IMR-90 (cell line): ENCODE measurements at regions of chr1 and their contacts with region 1.

Region 1: GRCh38 chr1:52002038-52002917 is 11.8 kb upstream of the RAB3B start:
- DNase-seq: peak; percentile 95
- ATAC-seq: peak; percentile 91
- H3K4me3 ChIP-seq: no peak overlapping the region
- H3K27ac ChIP-seq: no peak overlapping the region
- H3K4me1 ChIP-seq: peaks cover 5% of the 10 kb centered on the region
- H3K27me3 ChIP-seq: no peaks in the 10 kb centered on the region
- CTCF ChIP-seq: peak; percentile 94
- POLR2A ChIP-seq: no peak
- RAD21 ChIP-seq: peak; percentile 99

Region 2: DNA sequence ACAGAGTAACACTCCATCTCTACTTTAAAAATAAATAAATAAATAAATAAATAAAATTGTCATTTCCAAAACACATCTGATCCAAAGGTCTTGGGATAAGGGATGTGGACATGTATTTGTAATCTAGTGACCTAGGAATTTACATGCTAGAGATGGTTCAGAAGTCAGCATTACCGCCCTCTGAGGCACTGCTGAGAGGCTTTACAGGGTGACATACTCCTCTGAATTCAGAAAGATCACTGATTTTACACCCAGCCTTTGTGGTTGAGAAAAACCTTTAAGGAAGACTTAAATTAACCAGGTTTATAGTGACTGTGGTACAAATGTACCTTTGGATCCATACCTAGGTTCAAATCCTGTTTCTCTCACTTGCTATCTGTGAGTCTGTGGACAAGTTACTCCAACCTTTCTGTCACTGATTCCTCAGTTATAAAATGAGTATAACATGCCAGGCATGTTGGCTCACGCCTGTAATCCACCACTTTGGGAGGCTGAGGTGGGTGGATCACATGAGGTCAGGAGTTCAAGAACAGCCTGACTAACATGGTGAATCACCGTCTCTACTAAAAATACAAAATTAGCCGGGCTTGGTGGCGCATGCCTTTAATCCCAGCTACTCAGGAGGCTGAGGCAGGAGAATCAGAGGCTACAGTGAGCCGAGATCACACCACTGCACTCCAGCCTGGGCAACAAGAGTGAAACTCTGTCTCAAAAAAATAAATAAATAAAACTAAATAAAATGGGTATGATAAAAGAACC is 365.3 kb before region 1 on chr1:
- CTCF ChIA-PET with region 1: no interaction called
- POLR2A ChIA-PET with region 1: no interaction called
- dilution Hi-C with region 1: no loop called
- in situ Hi-C with region 1: no loop called
- intact Hi-C with region 1: loop called (anchors 10 kb)
- DNase-seq: peak; percentile 91
- ATAC-seq: peak; percentile 97
- H3K4me3 ChIP-seq: no peak overlapping the region
- H3K27ac ChIP-seq: no peak overlapping the region; the same call in none of the 2 replicates
- H3K4me1 ChIP-seq: peaks cover 9% of the 10 kb centered on the region; the same call in 1 of the 2 replicates
- H3K27me3 ChIP-seq: no peaks in the 10 kb centered on the region
- CTCF ChIP-seq: no peak
- POLR2A ChIP-seq: peak; percentile 16; the same call in 1 of the 2 replicates
- RAD21 ChIP-seq: peak; percentile 30

Region 3: DNA sequence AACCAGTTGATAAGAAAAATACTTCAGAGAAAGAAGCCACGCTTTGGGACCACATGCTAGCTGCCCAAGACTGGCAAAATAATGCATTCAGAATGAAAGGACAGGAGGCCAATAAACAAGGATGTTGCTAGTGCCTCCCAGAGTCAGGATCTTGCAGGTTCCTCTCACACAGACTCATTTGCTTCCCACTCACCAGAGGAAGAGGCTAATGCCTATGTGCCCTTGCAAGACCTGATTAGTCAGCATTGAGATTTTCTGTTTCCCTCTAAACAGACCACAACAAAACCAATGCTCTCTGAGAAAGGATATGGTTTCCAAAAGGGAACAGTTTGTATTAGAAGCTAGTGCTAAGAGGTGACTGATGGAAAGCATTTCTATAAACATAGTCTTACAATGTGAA is 209.4 kb before region 1 on chr1:
- CTCF ChIA-PET with region 1: no interaction called
- POLR2A ChIA-PET with region 1: no interaction called
- dilution Hi-C with region 1: no loop called
- in situ Hi-C with region 1: no loop called
- intact Hi-C with region 1: loop called (anchors 5 kb)
- DNase-seq: peak; percentile 88
- ATAC-seq: peak; percentile 83
- H3K4me3 ChIP-seq: no peak overlapping the region
- H3K27ac ChIP-seq: no peak overlapping the region
- H3K4me1 ChIP-seq: no peaks in the 10 kb centered on the region
- H3K27me3 ChIP-seq: no peaks in the 10 kb centered on the region
- CTCF ChIP-seq: no peak; the same call in 1 of the 2 replicates
- POLR2A ChIP-seq: no peak
- RAD21 ChIP-seq: 0 out of 2 replicates have a peak, but pooled peaks have one; percentile 25

Region 4: DNA sequence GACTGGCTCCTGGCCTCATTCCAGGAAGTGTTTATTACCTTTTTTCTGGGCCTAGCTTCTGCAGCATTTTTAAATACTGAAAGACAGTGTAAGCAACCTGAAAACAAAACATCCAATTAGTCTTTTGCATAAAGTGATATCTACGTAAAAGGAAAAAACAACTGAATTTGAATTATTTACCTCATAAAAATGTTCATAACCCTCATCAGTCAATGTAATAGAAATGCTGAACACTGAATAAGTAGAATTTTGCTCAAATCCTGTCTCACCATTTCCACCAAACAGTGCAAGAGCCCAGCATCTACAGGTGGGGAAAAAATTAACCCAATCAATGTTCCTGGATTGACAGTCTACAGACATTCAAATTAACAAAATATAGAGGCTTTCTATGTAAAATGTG is 187.8 kb before region 1 on chr1:
- CTCF ChIA-PET with region 1: no interaction called
- POLR2A ChIA-PET with region 1: no interaction called
- dilution Hi-C with region 1: no loop called
- in situ Hi-C with region 1: no loop called
- intact Hi-C with region 1: loop called (anchors 5 kb)
- DNase-seq: no peak
- ATAC-seq: no peak
- H3K4me3 ChIP-seq: no peak overlapping the region
- H3K27ac ChIP-seq: no peak overlapping the region
- H3K4me1 ChIP-seq: peaks cover 14% of the 10 kb centered on the region
- H3K27me3 ChIP-seq: no peaks in the 10 kb centered on the region
- CTCF ChIP-seq: no peak
- POLR2A ChIP-seq: no peak
- RAD21 ChIP-seq: no peak

Region 5: DNA sequence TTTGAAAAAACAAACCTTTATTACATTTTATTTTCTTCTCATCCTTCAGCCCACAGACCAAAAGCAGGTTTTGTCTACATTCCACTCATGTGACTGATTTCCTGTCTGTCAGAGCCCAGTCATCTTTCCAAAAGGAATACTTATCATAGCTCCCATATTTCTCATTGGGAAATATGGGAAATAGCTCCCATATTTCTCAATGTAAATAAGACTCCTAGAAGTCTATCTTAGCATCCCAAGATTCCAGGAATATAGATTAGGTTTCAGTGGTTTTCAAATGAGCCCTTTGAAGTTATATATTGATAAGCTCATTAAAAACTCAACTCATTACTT is 104.6 kb before region 1 on chr1:
- CTCF ChIA-PET with region 1: interaction called, 9 read pairs
- POLR2A ChIA-PET with region 1: no interaction called
- dilution Hi-C with region 1: no loop called
- in situ Hi-C with region 1: loop called (anchors 5 kb)
- intact Hi-C with region 1: loop called (anchors 1 kb)
- DNase-seq: peak; percentile 97
- ATAC-seq: no peak
- H3K4me3 ChIP-seq: no peak overlapping the region
- H3K27ac ChIP-seq: peak overlapping the region; percentile 96
- H3K4me1 ChIP-seq: peaks cover 14% of the 10 kb centered on the region
- H3K27me3 ChIP-seq: no peaks in the 10 kb centered on the region
- CTCF ChIP-seq: no peak
- POLR2A ChIP-seq: no peak
- RAD21 ChIP-seq: no peak

Region 6: DNA sequence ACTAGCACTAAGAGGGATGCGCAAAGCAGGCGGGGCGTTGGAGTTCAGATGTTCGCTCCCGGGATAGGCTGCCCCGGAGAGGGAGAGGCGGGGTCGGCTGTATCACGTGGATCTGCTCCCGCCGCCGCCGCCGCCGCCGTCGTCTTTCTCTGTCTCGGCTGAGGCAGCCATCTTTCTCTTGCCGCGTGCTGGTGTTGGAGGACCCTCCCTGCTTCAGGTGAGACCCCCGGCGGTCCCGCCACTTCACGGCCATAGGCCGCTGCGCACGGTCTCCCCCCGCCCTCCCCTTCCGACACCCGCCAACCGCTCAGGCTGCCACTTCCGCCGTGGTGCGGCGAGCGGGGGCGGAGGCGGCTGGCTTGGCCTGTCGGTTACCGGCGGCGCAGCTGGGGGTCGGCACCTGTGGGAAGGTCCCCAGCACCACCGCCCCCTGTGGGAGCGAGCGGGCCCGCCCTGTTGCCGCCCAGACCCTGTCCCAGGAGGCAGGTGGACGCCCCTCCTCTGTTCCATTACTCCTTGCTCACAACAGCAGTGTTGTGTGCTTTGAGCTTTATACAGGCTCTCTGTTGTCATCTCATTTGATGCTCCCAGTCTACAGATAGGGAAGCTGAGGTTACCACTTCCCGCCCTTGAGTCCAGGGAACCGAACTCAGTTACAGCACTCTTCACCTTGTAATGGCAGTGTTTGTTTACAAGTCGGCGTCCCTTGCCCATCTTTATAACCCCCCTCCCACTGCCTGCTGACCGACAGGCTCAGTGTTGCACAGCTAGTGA is 54.1 kb after region 1 on chr1 and contains the start of gene BTF3L4:
- CTCF ChIA-PET with region 1: no interaction called
- POLR2A ChIA-PET with region 1: no interaction called
- dilution Hi-C with region 1: no loop called
- in situ Hi-C with region 1: no loop called
- intact Hi-C with region 1: loop called (anchors 2 kb)
- DNase-seq: peak; percentile 89
- ATAC-seq: peak; percentile 90
- H3K4me3 ChIP-seq: peak within 1 kb of the TSS; percentile 84
- H3K27ac ChIP-seq: peak within 1 kb of the TSS; percentile 94
- H3K4me1 ChIP-seq: peaks cover 4% of the 10 kb centered on the region; the same call in 1 of the 2 replicates
- H3K27me3 ChIP-seq: no peaks in the 10 kb centered on the region
- CTCF ChIP-seq: no peak
- POLR2A ChIP-seq: peak; percentile 37; the same call in 1 of the 2 replicates
- RAD21 ChIP-seq: no peak
- total RNA-seq, gene BTF3L4: 41.2 and 46.4 TPM in 2 replicates

Region 7: DNA sequence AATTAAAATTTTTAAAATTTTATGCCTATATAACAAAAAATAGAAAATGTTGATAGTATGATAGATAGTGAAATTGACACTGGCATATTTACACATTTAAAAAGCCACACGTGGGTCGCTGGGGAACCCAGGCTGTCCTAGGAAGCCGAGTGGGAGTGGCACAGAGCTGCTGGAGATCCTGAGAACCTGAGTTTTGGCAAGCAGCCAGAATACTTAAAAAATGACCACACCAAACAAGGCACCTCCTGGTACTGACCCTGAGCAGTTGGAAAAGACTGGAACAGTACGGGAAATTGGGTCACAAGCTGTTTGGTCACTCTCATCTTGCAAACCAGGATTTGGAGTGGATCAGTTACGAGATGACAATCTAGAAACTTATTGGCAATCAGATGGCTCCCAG is 251.1 kb after region 1 on chr1:
- CTCF ChIA-PET with region 1: no interaction called
- POLR2A ChIA-PET with region 1: no interaction called
- dilution Hi-C with region 1: no loop called
- in situ Hi-C with region 1: no loop called
- intact Hi-C with region 1: no loop called
- DNase-seq: no peak
- ATAC-seq: no peak
- H3K4me3 ChIP-seq: no peak overlapping the region
- H3K27ac ChIP-seq: no peak overlapping the region
- H3K4me1 ChIP-seq: no peaks in the 10 kb centered on the region
- H3K27me3 ChIP-seq: no peaks in the 10 kb centered on the region
- CTCF ChIP-seq: no peak
- POLR2A ChIP-seq: no peak
- RAD21 ChIP-seq: no peak